Vagina (tissue), 2 donors: ENCODE measurements at regions of chr14 and their contacts with region 1.

Region 1: GRCh38 chr14:51527073-51527472 is 124.6 kb upstream of the FRMD6 start:
- DNase-seq: no peak
- H3K4me3 ChIP-seq: no peak overlapping the region
- H3K27ac ChIP-seq: no peak overlapping the region
- H3K4me1 ChIP-seq: no peaks in the 10 kb centered on the region
- H3K27me3 ChIP-seq: no peaks in the 10 kb centered on the region
- CTCF ChIP-seq: no peak
- POLR2A ChIP-seq: no peak

Region 2: DNA sequence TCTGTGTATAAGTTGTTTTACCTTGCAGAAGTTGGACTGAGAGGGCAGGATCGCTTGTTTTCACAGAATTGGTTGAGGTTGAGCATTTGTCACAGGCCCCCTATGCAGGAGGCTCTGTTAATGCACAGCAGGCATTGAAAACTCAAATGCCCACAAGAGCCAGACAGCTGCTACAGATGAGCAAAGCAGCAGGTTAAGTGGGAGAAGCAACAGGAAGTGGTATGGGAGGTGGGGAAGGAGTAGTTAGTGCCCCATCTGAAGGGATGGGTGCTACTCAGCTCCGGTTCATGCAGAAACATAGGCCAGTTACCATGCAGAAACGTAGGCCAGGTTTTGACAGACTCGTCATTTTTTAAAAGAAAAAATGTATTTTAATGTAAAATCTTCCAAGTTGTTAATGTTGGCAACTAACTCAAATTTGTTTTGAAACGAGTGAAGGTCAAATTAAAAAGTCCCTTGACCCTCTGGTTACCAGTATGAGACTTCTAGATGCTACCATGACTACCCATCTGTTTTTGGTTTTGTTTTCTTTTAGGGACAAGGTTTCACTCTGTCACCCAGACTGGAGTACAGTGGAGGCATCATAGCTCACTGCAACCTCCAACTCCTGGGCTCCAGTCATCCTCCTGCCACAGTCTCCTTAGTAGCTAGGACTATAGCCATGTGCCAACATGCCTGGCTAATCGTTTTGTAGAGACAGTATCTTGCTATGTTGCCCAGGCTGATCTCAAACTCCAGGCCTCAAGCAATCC is 39.9 kb after region 1 on chr14:
- intact Hi-C with region 1: no loop called
- DNase-seq: no peak
- H3K4me3 ChIP-seq: no peak overlapping the region
- H3K27ac ChIP-seq: no peak overlapping the region
- H3K4me1 ChIP-seq: peaks cover 21% of the 10 kb centered on the region
- H3K27me3 ChIP-seq: no peaks in the 10 kb centered on the region
- CTCF ChIP-seq: no peak
- POLR2A ChIP-seq: no peak

Region 3: DNA sequence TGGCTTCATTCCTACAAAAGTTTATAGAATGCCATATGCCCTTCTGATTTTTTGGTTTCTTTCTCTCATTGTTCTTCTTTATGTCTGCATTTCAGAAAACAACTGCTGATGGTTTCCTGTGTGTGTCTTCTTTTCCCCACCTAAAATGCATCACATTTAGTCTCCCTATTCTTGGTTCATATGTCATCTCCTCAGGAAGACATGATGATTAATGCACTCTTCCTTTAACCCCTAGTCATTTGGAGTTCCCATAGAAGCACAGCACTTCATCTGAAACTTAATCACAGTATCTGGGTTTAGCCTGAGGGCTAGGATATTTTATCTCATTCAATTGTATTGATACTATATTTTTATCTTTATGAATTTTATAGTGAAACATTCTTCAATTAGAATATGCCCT is 1242.8 kb after region 1 on chr14:
- intact Hi-C with region 1: loop called (anchors 5 kb)
- DNase-seq: no peak
- H3K4me3 ChIP-seq: no peak overlapping the region
- H3K27ac ChIP-seq: no peak overlapping the region
- H3K4me1 ChIP-seq: no peaks in the 10 kb centered on the region
- H3K27me3 ChIP-seq: no peaks in the 10 kb centered on the region
- CTCF ChIP-seq: no peak
- POLR2A ChIP-seq: no peak